Breast epithelium (tissue), 4 donors: ENCODE measurements at regions of chrX and their contacts with region 1.

Region 1: DNA sequence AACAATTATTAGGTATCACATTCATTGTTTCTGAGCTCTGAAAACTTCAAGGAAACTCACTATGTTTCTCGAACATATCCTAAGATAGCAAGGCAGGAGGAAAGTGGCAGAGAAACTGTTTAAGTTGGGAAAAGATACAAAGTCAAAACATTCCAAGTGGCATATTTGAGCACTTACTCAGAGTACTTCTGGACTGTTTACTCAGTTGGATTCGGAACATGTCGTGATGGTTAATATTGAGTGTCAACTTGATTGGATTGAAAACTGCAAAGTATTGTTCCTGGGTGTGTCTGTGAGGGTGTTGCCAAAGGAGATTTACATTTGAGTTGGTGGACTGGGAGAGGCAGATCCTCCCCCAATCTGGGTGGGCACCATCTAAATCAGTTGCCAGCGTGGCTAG is 298.3 kb downstream of the IL1RAPL2 start:
- DNase-seq: no peak
- H3K4me3 ChIP-seq: no peak overlapping the region
- H3K27ac ChIP-seq: no peak overlapping the region
- H3K4me1 ChIP-seq: no peaks in the 10 kb centered on the region
- H3K27me3 ChIP-seq: peaks cover 0 to 60% of the 10 kb centered on the region in 2 donors
- CTCF ChIP-seq: no peak
- POLR2A ChIP-seq: no peak

Region 2: GRCh38 chrX:103183912-103184311 is 1680.4 kb before region 1 on chrX:
- intact Hi-C with region 1: no loop called
- DNase-seq: no peak
- H3K4me3 ChIP-seq: no peak overlapping the region
- H3K27ac ChIP-seq: no peak overlapping the region
- H3K4me1 ChIP-seq: no peaks in the 10 kb centered on the region
- H3K27me3 ChIP-seq: peaks cover 0 to 52% of the 10 kb centered on the region in 2 donors
- CTCF ChIP-seq: no peak
- POLR2A ChIP-seq: no peak

Region 3: DNA sequence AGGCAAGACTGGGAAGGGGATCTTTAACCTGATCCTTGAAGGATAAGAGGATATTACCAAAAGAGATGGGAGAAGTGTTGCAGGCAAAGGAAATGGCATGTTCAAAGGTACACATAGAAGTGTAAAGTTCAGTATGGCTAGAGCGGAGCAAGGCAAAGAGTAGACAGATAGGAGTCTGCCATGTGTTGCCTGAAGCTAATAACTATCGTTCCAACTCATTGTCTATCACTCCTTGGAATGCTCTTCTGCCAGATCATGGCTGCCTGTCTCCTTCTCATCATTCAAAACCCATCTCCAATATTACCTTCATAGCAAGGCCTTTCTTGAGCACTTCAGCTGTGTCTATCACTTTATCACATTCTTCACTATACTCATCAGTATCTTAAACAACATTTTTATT is 353.5 kb before region 1 on chrX:
- intact Hi-C with region 1: loop called (anchors 5 kb)
- DNase-seq: no peak
- H3K4me3 ChIP-seq: no peak overlapping the region
- H3K27ac ChIP-seq: no peak overlapping the region
- H3K4me1 ChIP-seq: no peaks in the 10 kb centered on the region
- H3K27me3 ChIP-seq: peaks cover 0 to 25% of the 10 kb centered on the region in 2 donors
- CTCF ChIP-seq: no peak
- POLR2A ChIP-seq: no peak

Region 4: GRCh38 chrX:106356580-106356979 is 1492.3 kb after region 1 on chrX:
- intact Hi-C with region 1: no loop called
- DNase-seq: no peak
- H3K4me3 ChIP-seq: no peak overlapping the region
- H3K27ac ChIP-seq: no peak overlapping the region
- H3K4me1 ChIP-seq: no peaks in the 10 kb centered on the region
- H3K27me3 ChIP-seq: peaks cover 0 to 28% of the 10 kb centered on the region in 2 donors
- CTCF ChIP-seq: no peak
- POLR2A ChIP-seq: no peak